Mammary epithelial cell (primary cell): ENCODE measurements at regions of chr9 and their contacts with region 1.

Region 1: GRCh38 chr9:86741311-86742208 is 205.7 kb downstream of the GAS1 start:
- DNase-seq: peak; percentile 97
- H3K4me3 ChIP-seq: no peak overlapping the region
- H3K27ac ChIP-seq: peak overlapping the region; percentile 67
- H3K4me1 ChIP-seq: peaks cover 19% of the 10 kb centered on the region
- H3K27me3 ChIP-seq: no peaks in the 10 kb centered on the region
- CTCF ChIP-seq: no peak

Region 2: DNA sequence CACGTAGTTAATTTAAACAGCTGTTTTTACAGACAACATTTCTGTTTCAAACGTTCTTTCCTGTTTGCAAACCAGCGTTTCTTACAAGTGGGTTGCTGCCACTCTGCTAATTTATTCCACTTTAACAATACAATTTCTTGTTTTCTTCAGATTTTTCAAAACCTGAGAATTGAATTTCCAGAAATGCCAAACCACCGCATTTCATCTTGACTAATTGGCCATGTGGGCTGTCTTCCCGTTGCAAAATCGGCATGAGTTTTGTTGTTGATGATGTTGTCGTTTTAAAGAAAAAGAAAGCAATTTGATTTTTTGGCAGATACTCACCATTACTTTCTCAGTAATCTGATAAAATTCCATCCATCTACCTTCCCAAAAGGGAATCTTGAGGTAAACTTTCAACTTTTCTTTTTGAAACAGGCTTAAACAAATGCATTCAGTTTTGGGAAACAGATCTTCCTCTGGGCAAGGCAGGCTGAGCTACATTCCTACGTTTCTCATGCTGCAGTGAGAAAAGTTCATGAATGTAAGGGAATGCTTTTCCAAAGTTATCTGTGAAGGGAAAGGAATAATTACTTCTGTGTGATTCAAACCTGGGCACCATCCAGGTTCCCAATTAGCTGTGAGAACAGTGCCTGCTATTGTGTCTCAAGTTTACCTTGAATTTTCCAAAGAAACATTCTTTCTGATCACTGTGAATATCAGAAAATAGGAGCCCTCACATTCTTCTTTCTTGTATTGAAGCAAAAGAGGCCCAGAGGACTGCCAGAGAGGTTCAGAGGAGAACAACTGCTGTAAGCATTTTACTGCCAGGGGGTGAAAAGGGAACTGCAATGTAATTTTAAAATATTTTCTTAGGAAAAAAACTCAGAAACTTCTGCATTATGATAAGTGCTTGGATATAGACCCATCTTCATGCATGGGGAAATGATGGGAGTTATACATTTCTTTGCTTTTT is 286.6 kb before region 1 on chr9:
- CTCF ChIA-PET with region 1: no interaction called
- dilution Hi-C with region 1: no loop called
- in situ Hi-C with region 1: no loop called
- intact Hi-C with region 1: no loop called
- DNase-seq: peak; percentile 9
- H3K4me3 ChIP-seq: peak overlapping the region in 1 of 3 experiments; percentile 2
- H3K27ac ChIP-seq: peak overlapping the region; percentile 5
- H3K4me1 ChIP-seq: peaks cover 20% of the 10 kb centered on the region
- H3K27me3 ChIP-seq: no peaks in the 10 kb centered on the region
- CTCF ChIP-seq: no peak

Region 3: GRCh38 chr9:86721843-86722711 is 19.5 kb before region 1 on chr9:
- CTCF ChIA-PET with region 1: no interaction called
- dilution Hi-C with region 1: no loop called
- in situ Hi-C with region 1: no loop called
- intact Hi-C with region 1: loop called (anchors 1 kb)
- DNase-seq: peak; percentile 72
- H3K4me3 ChIP-seq: peak overlapping the region in 1 of 3 experiments; percentile 5
- H3K27ac ChIP-seq: peak overlapping the region; percentile 55
- H3K4me1 ChIP-seq: peaks cover 31% of the 10 kb centered on the region
- H3K27me3 ChIP-seq: no peaks in the 10 kb centered on the region
- CTCF ChIP-seq: no peak

Region 4: DNA sequence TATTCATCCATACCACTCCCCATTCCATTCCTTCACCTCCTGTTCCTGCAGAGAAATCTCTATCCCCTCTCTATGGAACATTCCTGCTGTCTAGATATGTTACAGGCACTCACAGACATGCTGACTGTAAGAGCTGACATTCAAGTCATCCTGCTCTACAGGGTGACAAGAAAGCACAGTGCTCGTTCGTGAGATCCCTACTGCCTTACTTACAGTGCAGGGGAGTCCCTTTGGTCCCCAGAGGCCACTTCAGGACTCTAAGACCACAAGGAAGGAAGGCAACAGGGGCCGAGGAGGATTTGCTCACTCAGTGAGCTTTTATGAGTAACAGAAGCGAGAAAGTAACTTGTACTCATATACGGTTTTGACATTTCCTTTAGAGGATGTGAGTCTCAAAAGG is 95.2 kb after region 1 on chr9:
- CTCF ChIA-PET with region 1: no interaction called
- dilution Hi-C with region 1: no loop called
- in situ Hi-C with region 1: no loop called
- intact Hi-C with region 1: loop called (anchors 1 kb)
- DNase-seq: no peak
- H3K4me3 ChIP-seq: no peak overlapping the region
- H3K27ac ChIP-seq: no peak overlapping the region
- H3K4me1 ChIP-seq: no peaks in the 10 kb centered on the region
- H3K27me3 ChIP-seq: no peaks in the 10 kb centered on the region
- CTCF ChIP-seq: no peak